ENCODE measurements at regions of chr6 and their contacts with region 1.

Region 1: DNA sequence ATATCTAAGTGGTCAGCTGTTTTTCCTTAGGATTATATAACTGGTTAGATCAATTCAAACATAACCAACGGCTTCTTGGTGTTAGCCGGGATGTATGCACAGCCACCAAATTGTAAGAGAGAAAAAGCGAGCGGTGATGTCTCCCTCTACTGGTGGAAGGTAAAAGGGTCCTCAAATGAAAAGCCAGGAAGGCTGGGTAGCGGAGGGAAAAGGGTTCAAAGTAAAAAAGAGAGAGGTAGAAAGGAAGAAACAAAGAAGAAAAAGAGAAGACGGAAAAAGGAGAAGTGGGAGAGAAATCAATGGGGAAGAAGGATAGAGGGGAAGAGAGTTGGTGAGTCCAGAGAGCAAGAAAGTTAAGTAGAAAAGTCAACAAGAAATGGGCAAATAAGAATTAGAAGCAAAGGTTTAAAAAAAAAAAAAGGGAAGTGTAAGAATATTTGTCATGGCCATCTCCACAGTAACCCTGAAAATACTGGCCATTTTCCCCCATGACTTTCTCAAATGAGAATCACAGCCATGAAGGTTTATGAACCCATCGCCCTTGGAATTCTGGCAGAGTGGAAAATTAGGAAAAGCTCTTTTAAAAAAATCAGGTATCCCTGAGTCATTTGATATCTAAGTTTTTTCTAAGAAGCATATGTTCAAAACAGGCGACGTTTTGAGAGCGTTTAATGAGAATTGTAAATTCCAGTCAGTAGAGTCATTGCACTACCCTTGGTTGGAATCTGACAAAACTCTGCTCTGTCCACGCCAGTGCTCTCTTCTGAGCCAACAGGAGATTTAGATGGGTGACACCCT is 155.6 kb upstream of the SNX9 start:
- DNase-seq: peak; percentile 38

Region 2: DNA sequence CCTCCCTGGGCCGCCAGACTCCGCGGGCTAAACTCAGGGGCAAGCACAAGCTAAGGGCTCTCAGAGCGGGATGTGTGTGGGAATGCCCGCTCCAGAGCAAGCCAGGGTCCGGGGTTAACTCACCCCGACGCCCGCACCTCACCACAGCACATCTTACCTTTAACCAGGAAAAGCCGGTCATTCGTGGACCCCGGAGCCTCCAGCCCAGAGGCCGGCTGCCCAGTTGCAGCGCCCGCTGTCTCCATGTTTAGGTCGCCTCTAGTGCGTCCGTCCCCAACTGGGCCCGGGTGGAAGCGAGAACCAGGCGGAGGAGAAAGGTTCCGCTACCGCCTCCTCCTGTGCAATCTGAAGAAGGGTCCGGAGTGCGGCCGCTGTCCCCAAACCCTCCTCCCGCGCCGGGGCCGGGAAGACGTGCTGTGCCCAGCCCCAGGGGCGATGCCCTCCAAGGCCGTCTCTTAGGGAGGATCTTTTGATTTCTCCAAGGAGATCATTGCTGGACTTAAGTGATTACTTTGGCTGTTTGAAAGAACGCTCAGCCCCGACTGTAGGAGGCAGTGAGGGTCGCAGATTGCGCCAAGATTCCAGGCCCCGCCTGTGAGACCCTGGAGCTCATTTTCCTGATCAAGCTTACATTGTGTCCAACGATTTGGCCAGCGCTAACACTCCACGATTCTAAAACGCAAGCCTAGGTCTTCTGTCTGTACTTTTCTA is 344.0 kb before region 1 on chr6 and contains the start of gene TMEM242:
- intact Hi-C with region 1: loop called (anchors 2 kb)
- DNase-seq: peak; percentile 97
- total RNA-seq, gene TMEM242: 18.9 TPM

Region 3: GRCh38 chr6:157571269-157571668 is 96.1 kb before region 1 on chr6:
- intact Hi-C with region 1: no loop called
- DNase-seq: no peak

Region 4: DNA sequence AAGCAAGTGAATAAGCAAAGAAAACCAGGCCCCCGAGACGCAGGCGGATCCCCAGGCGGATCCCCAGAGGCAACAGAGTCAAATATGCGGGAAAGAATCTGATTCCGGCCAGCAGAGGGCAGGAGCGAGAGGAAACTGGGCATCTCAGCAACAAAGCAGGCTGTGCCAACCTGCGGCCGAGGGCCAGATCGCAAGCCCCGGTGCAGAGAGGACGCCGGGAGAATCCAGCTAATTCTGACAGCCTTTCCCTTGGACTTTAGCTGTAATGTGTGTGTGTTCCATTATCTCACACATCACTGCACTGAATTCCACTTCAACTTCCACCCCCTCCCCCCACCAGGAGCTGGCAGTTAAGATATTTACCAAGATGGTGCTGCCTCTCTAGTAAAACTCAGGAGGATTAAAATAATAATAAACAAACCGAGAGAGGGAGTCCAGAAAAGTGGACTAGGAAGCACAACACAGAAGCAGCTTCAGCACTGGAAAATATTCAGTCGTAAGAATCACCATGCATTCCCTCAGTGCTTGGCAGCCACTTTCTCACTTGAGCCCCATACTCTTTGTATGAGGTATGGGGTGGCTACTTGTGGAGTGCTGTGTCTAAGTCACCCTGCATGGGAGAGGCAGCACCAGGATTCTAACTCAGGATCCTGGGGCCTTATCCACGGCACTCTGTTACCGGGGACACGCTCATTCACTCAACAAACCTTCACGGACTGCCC is 89.5 kb after region 1 on chr6:
- intact Hi-C with region 1: loop called (anchors 5 kb)
- DNase-seq: peak; percentile 88

Region 5: GRCh38 chr6:157800420-157801237 is 133.2 kb after region 1 on chr6:
- intact Hi-C with region 1: no loop called
- DNase-seq: no peak

Region 6: DNA sequence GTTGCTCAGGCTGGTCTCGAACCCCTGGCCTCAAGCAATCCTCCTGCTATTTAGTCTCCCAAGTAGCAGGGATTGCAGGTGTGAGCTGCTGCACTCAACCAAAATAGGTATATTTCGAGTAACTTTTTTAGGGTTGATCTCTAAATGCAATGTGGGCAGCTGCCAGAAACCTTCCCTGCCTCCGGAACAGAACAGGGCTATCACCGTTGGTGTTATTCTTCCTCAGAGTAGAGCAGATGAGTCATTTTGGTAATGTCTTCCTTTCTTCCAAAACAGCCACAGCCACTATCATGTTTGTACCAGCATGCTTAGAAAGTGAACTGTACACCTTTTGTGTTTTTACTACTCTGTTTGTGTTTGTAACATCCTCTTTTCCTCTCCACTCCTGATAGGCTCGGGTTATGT is 199.7 kb after region 1 on chr6:
- intact Hi-C with region 1: loop called (anchors 5 kb)
- DNase-seq: no peak

Measured in cardiac septum (tissue), 1 donor.